Activated B cell treated with CpG ODN at 0.5 μM for 24 hours (primary cell): ENCODE measurements at regions of chr16 and their contacts with region 1.

Region 1: DNA sequence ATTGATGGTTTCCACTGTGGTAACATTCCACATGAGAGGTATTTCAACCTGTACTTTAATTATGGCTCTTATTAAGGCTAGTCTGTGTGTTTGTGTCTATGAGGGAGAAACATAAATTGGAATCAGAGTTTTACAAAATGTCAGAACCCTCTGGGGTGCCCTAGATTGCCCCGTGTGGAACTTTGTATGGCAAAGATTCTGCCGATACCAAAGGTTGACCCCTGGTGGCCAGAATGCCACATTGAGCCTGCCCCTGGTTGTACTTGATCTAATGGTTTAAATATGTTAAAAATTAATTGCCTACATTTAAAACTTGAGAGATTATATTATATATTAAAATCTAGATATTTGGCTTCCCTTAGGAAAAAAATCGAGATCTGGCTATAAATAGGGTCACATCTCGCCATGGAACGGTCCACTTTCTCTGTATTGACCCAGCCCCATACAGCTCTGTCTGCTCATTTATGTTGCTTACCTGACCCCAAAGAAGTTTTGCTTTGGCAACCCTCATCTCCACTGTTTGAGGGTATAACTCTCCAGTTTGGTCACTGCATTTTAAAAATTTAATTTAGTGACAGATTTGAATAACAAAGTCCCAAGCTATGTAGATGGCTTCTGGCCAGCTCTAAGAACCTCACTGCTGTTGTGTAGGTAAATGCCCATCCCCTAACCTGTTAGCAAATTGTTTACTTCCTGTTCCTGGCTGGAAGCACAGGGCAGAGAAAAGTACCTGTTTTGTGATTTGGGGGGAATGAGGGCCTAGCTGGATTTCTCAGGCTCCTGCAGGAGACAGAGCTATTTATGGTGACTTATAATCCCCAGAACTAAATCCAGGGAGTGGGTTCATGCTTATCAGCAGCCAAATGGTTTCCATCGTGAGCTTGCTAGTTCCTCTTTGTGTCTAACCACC is 95.0 kb downstream of the PLCG2 start:
- DNase-seq: peak; percentile 45
- ATAC-seq: peak; percentile 91
- H3K4me3 Mint-ChIP-seq: no peak overlapping the region
- H3K27ac Mint-ChIP-seq: peak overlapping the region; percentile 66
- H3K4me1 Mint-ChIP-seq: peaks cover 41% of the 10 kb centered on the region
- H3K27me3 Mint-ChIP-seq: no peaks in the 10 kb centered on the region
- CTCF ChIP-seq: no peak

Region 2: DNA sequence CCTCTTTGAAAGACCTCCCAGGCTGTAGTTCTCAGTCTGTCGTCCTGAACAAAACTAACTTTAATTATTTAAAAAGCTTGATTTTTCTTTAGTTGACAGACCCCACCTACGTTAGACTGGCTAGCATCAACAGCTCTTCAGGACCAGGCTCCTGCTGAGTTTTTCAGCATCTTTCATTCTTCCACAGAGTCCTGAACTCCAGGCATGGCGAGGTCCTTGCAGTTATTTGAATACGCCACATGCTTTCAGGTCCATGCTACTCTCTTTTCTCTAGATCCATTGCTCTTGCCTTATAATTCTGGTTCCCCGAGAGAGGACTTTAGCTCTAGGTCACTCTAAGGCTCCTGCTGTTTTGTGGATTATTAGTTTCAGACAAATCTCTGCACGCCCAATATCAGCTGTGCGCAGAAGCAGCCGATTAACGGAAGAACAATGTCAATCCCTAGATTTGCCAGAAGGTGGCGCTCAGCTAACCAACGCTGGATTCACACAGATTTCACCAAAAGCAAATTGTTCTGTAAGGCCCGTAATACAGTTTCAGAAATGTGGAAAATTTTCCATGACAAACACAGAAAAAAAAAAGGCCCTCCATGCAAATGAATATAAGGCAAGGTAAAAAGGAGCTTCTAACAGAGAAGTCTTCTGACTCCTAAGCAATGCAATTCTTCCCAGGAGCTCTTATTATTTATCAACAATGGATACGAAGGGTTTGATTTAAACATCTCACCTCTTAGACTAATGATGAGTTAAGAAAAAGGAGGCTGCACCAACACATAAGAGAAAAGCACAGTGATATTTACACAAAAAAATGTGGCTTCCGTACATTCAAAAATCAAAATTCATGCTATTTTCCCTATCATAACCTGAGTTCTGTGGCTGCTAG is 669.1 kb before region 1 on chr16:
- CTCF ChIA-PET with region 1: no interaction called
- POLR2A ChIA-PET with region 1: no interaction called
- intact Hi-C with region 1: loop called (anchors 5 kb)
- DNase-seq: no peak
- ATAC-seq: no peak
- H3K4me3 Mint-ChIP-seq: no peak overlapping the region
- H3K27ac Mint-ChIP-seq: no peak overlapping the region
- H3K4me1 Mint-ChIP-seq: no peaks in the 10 kb centered on the region
- H3K27me3 Mint-ChIP-seq: peaks cover 17% of the 10 kb centered on the region
- CTCF ChIP-seq: no peak

Region 3: GRCh38 chr16:81623363-81624102 is 250.6 kb before region 1 on chr16:
- CTCF ChIA-PET with region 1: interaction called, 3 read pairs
- POLR2A ChIA-PET with region 1: no interaction called
- intact Hi-C with region 1: loop called (anchors 2 kb)
- DNase-seq: no peak
- ATAC-seq: peak; percentile 41
- H3K4me3 Mint-ChIP-seq: no peak overlapping the region
- H3K27ac Mint-ChIP-seq: no peak overlapping the region
- H3K4me1 Mint-ChIP-seq: peaks cover 17% of the 10 kb centered on the region
- H3K27me3 Mint-ChIP-seq: no peaks in the 10 kb centered on the region
- CTCF ChIP-seq: no peak

Region 4: DNA sequence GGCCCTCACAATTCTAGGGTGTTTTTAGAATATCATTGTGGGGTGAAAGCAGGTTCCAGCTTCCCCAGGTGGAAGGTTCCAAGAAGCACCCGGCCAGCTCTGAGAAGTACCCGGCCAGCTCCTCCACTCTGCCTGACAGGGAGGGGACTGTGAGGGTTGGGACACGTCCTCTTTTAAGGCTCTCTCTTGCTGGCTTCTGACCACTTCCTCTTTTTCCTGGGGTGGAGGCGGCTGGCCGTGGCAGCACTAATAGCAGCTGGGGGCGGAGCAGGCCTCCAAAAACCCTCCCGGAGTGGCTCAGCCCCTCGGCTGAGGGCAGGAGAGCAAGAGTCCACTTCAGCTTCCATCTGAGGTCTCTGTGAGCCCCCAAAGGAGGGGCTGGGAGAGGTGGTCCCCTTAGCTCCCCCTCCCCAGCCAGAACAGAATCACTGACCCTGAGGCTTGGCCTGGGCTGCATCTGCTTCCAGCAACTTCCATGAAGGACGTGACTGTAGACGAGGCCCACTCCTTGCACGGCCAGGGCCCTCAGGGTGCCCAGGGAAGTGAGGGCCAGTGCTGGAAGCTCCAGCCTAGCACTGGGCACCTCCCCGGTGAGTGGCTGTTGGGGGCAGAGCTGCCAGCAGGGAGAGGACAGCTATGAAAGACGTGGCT is 121.7 kb before region 1 on chr16:
- CTCF ChIA-PET with region 1: interaction called, 15 read pairs
- POLR2A ChIA-PET with region 1: interaction called, 5 read pairs
- intact Hi-C with region 1: no loop called
- DNase-seq: peak; percentile 70
- ATAC-seq: peak; percentile 92
- H3K4me3 Mint-ChIP-seq: peak overlapping the region; percentile 46
- H3K27ac Mint-ChIP-seq: peak overlapping the region; percentile 82
- H3K4me1 Mint-ChIP-seq: peaks cover 82% of the 10 kb centered on the region
- H3K27me3 Mint-ChIP-seq: no peaks in the 10 kb centered on the region
- CTCF ChIP-seq: no peak

Region 5: GRCh38 chr16:81798311-81799137 is 75.6 kb before region 1 on chr16:
- CTCF ChIA-PET with region 1: interaction called, 19 read pairs
- POLR2A ChIA-PET with region 1: interaction called, 16 read pairs
- intact Hi-C with region 1: loop called (anchors 1 kb)
- DNase-seq: peak; percentile 74
- ATAC-seq: peak; percentile 80
- H3K4me3 Mint-ChIP-seq: peak overlapping the region; percentile 67
- H3K27ac Mint-ChIP-seq: peak overlapping the region; percentile 89
- H3K4me1 Mint-ChIP-seq: peaks cover 87% of the 10 kb centered on the region
- H3K27me3 Mint-ChIP-seq: no peaks in the 10 kb centered on the region
- CTCF ChIP-seq: no peak

Region 6: DNA sequence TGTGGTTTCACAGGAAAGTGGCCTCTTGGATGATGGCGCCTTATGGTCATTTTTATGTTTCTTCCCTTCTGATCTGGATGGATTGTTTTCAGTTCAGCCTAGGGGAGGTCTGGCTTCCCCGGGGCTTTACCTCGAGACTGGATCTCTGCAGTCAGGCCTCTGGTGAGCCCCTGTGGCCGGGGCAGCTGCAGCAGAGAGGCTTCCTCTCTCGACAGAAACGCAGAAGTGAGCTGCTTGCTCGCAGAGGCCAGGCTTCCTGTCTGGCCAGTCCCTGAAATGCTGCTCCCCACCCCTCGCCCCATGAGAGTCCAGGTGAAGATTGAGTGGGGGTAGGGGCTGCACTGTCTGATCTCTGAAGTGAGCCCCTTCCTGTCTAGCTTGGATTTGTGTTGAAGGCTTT is 51.0 kb before region 1 on chr16:
- CTCF ChIA-PET with region 1: interaction called, 26 read pairs
- POLR2A ChIA-PET with region 1: interaction called, 11 read pairs
- intact Hi-C with region 1: loop called (anchors 2 kb)
- DNase-seq: peak; percentile 67
- ATAC-seq: peak; percentile 65
- H3K4me3 Mint-ChIP-seq: peak overlapping the region; percentile 80
- H3K27ac Mint-ChIP-seq: peak overlapping the region; percentile 97
- H3K4me1 Mint-ChIP-seq: peaks cover 99% of the 10 kb centered on the region
- H3K27me3 Mint-ChIP-seq: no peaks in the 10 kb centered on the region
- CTCF ChIP-seq: no peak

Region 7: GRCh38 chr16:81863630-81864352 is 10.3 kb before region 1 on chr16:
- CTCF ChIA-PET with region 1: interaction called, 10 read pairs
- POLR2A ChIA-PET with region 1: interaction called, 10 read pairs
- intact Hi-C with region 1: no loop called
- DNase-seq: no peak
- ATAC-seq: peak; percentile 73
- H3K4me3 Mint-ChIP-seq: peak overlapping the region; percentile 71
- H3K27ac Mint-ChIP-seq: peak overlapping the region; percentile 88
- H3K4me1 Mint-ChIP-seq: peaks cover 74% of the 10 kb centered on the region
- H3K27me3 Mint-ChIP-seq: no peaks in the 10 kb centered on the region
- CTCF ChIP-seq: no peak